Activated CD4-positive, alpha-beta T cell treated with anti-CD3 and anti-CD28 coated beads for 36 hours (primary cell): ENCODE measurements at regions of chr9 and their contacts with region 1.

Region 1: DNA sequence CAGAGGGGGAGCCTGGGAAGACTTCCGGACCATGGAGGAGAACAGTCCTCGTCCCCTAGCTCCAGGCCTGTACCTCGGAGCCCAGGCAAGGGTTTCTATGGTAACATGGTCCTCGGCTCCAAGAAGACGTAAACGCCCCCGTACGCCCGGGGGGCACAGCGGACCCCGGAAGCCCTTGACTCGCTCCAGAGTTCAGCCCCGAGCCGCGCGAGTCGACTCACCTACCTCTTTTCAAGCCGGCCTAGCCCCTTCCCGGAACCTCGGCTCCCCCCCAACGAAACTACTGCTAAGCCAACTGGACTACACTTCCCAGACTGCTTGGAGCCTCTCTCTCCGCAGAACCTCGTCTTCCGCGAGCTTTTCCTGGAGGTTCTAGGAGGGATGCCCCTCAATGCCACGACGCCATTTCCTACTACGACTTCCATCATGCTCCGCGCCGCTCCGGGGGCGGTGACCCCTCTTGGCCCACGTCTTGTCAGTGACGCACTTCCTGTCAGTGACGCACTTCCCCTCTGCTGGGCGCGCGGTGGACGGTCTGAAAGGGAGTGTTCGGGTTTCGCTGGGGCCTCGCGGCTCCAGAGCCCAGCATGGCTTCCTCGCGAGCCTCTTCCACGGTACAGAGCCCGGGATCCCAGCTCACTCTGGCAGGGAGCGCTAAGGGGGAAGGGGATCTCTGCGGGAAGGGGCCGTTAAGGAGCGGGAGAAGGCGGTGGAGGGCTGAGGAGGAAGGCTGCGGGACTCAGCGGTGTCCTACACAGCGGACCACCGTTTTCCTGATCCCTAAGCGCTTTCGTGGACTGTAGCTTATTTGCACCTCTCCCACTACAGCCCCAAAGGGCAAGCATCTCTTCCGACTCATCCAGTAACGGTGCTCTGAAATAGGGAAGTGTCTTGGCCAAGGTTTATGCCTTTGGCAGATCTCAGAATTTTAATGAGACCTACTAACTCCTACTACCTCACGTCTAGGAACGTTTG is at the starts of genes CDC26 and PRPF4:
- DNase-seq: peak; percentile 98
- ATAC-seq: peak; percentile 91
- H3K4me3 Mint-ChIP-seq: no peak within 1 kb of the TSS
- H3K27ac Mint-ChIP-seq: no peak within 1 kb of the TSS
- H3K4me1 Mint-ChIP-seq: peaks cover 35% of the 10 kb centered on the region
- H3K27me3 Mint-ChIP-seq: no peaks in the 10 kb centered on the region
- total RNA-seq, gene CDC26: 27.5 to 44.2 TPM
- total RNA-seq, gene PRPF4: 51.5 to 53.1 TPM

Region 2: GRCh38 chr9:111631071-111631971 is 1644.1 kb before region 1 on chr9 and contains the start of gene DNAJC25:
- CTCF ChIA-PET with region 1: no interaction called
- POLR2A ChIA-PET with region 1: no interaction called
- intact Hi-C with region 1: loop called in 1 of 2 experiments (anchors 2 kb)
- DNase-seq: peak; percentile 98
- ATAC-seq: peak; percentile 98
- H3K4me3 Mint-ChIP-seq: peak within 1 kb of the TSS; percentile 94
- H3K27ac Mint-ChIP-seq: peak within 1 kb of the TSS; percentile 91
- H3K4me1 Mint-ChIP-seq: peaks cover 47% of the 10 kb centered on the region
- H3K27me3 Mint-ChIP-seq: no peaks in the 10 kb centered on the region
- total RNA-seq, gene DNAJC25: 6.3 to 7.5 TPM

Region 3: DNA sequence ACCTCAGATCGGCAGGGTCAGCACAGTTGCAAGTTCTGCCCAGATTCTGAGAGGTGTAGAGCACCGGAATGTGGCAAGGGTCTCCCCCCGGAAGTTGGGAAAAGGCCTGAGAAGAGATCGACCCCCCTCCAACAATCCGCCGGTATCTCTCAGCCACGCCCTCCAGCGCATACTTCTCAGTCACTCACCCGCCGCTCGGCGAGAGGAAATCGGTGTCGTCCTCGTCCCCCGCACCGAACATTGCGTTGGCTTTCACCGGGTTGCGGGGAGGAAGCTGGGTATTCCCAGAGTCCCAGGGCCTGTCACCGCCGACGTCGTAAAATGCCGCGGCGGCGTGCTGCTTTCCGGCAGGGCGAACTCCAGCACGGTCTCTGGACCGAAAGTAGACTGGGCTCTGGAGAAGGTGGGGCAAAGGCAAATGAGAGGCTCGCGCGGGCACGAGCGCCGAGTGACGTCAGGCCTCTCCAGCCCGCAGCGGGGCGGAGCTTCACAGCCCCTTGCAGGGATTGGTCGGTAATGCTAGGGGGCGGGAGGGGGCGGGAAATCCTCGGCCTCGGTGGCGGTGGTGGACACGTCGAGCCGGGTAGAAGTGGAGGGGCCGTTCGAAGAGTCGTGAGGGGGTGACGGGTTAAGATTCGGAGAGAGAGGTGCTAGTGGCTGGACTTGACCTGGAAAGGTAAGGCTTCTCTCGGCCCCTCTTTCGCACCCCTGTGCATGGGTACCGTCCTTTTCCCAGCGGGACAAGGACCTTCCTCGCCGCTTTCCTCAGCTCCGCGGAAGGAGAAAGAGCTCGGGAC is 54.2 kb before region 1 on chr9 and contains the starts of genes FKBP15 and SLC31A1:
- CTCF ChIA-PET with region 1: interaction called, 43 read pairs
- POLR2A ChIA-PET with region 1: interaction called, 3 read pairs
- intact Hi-C with region 1: loop called (anchors 1 kb)
- DNase-seq: peak; percentile 98
- ATAC-seq: peak; percentile 97
- H3K4me3 Mint-ChIP-seq: peak within 1 kb of the TSS; percentile 89
- H3K27ac Mint-ChIP-seq: peak within 1 kb of the TSS; percentile 93
- H3K4me1 Mint-ChIP-seq: peaks cover 46% of the 10 kb centered on the region
- H3K27me3 Mint-ChIP-seq: no peaks in the 10 kb centered on the region
- total RNA-seq, gene FKBP15: 34.0 to 44.2 TPM
- total RNA-seq, gene SLC31A1: 14.8 to 18.2 TPM

Region 4: DNA sequence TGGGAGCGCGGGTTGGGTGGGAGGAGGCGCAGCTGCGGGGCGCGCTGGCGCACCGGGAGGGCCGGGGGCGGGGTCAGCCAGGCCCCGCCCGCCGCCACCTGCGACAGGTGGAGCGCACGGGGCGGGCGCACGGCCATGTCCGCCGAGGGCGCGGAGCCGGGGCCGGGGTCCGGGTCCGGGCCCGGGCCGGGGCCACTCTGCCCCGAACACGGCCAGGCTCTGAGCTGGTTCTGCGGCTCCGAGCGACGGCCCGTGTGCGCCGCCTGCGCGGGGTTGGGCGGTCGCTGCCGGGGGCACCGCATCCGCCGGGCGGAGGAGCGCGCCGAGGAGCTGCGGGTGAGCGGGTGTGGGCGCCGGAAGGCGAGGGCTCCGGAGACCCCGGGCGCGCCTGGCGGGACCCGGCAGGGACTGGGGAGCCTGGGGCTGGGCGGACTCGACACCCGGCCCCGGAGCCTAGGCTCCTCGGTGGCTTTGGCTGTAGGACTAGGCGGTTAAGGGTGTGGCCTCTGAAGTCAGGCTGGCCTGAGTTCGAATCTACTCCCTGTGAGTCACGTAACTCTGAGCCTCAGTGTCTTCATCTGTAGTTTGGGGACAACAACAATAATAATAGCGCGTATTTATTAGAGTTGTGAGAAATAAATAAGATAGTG is 74.1 kb after region 1 on chr9 and contains the start of gene BSPRY:
- CTCF ChIA-PET with region 1: interaction called, 7 read pairs
- POLR2A ChIA-PET with region 1: no interaction called
- intact Hi-C with region 1: loop called in 1 of 2 experiments (anchors 2 kb)
- DNase-seq: peak; percentile 48
- ATAC-seq: peak; percentile 42
- H3K4me3 Mint-ChIP-seq: peak within 1 kb of the TSS; percentile 75
- H3K27ac Mint-ChIP-seq: peak within 1 kb of the TSS; percentile 71
- H3K4me1 Mint-ChIP-seq: peaks cover 48% of the 10 kb centered on the region
- H3K27me3 Mint-ChIP-seq: peaks cover 37% of the 10 kb centered on the region
- total RNA-seq, gene BSPRY: 5.7 to 6.6 TPM

Region 5: DNA sequence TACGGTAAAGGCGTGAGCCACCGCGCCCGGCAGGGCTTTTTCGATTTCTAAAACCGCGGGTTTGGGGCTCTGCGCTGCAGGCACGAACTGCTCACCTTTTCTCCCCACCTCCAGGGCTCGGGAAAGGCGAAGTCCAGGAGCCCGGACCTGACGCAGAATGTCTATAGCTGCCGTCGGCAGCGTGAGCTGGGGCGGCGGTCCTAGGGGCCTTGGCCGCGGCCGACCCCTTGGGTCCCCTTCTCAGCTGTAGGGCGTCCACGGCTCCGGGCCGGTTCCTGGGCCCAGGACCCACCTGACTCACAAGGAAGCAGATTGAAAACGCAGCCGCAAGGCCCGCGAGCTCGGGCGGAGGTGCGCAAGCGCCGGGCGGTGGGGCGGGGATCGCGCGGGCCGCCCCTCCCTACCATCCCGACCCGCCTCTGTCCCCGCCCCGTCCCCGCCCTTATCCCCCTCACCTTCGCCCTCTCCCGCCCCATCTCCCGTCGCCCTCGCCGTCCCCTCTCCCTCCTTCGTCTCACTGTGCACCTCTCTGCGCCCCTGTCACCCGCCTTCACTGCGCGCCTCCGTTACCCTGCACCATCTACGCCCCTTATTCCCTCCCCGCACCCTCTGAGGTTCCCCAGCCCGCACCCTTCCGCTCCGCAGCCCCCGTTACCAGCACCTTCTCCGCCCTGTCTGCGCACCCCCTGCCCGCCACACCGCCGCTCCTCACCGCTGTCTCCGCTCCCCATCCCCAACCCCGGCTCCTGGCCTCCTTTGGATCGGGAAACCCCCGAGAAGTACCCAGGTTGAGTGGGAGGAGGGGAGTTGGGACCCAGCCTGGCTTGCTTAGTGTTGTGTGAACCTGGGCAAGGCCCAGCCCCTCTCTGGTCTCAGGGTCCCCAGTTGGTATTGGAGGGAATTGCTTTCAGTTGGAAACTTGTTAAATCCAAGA is 101.5 kb after region 1 on chr9 and contains the start of gene HDHD3:
- CTCF ChIA-PET with region 1: interaction called, 3 read pairs
- POLR2A ChIA-PET with region 1: no interaction called
- intact Hi-C with region 1: loop called (anchors 1 kb)
- DNase-seq: peak; percentile 90
- ATAC-seq: peak; percentile 89
- H3K4me3 Mint-ChIP-seq: peak within 1 kb of the TSS; percentile 88
- H3K27ac Mint-ChIP-seq: peak within 1 kb of the TSS; percentile 89
- H3K4me1 Mint-ChIP-seq: peaks cover 17% of the 10 kb centered on the region
- H3K27me3 Mint-ChIP-seq: no peaks in the 10 kb centered on the region
- total RNA-seq, gene HDHD3: 12.7 to 16.5 TPM

Region 6: GRCh38 chr9:113511856-113512761 is 236.7 kb after region 1 on chr9:
- CTCF ChIA-PET with region 1: interaction called, 4 read pairs
- POLR2A ChIA-PET with region 1: no interaction called
- intact Hi-C with region 1: loop called (anchors 2 to 10 kb)
- DNase-seq: peak; percentile 84
- ATAC-seq: peak; percentile 72
- H3K4me3 Mint-ChIP-seq: peak overlapping the region; percentile 57
- H3K27ac Mint-ChIP-seq: peak overlapping the region; percentile 93
- H3K4me1 Mint-ChIP-seq: peaks cover 58% of the 10 kb centered on the region
- H3K27me3 Mint-ChIP-seq: no peaks in the 10 kb centered on the region

Region 7: DNA sequence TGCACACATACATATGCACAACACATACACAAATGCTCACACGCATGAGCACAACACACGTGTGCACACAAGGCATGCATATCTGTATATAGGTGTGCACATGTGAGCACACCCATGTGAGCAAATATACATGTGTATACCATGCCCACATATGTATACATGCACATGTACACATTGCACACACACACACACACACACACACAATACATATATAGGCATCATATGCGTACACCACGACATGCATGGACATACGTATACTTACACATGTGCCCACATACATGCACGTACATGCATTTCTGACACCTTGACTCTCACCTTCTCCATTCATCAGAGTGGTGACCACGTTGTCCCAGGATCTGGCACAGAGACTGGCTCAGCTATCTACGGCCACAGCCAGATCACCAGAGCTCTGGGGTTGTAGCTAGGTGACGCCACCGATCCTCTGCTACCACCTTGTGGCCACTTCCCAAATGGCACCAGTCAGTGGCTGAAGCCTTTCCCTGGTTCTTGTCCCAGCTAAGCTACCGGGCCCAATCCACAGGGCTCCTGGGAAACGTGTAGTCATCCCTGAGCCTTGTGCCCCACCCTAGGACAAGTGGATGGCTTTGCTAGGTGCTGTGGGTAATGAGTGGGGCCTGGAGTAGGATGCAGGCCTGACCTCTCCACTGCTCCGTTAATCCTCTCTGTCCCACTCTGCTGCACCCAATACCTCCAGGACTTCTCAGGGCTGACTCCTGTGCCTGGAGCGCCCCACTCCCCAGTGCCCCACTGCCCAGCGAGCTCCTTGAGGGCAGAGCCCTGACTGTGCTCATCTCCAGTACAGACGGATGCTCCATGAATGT is 382.5 kb after region 1 on chr9:
- CTCF ChIA-PET with region 1: interaction called, 42 read pairs
- POLR2A ChIA-PET with region 1: no interaction called
- intact Hi-C with region 1: loop called (anchors 1 to 2 kb)
- DNase-seq: peak; percentile 89
- ATAC-seq: peak; percentile 95
- H3K4me3 Mint-ChIP-seq: no peak overlapping the region
- H3K27ac Mint-ChIP-seq: no peak overlapping the region
- H3K4me1 Mint-ChIP-seq: peaks cover 7% of the 10 kb centered on the region
- H3K27me3 Mint-ChIP-seq: peaks cover 20% of the 10 kb centered on the region